Activated CD4-positive, alpha-beta T cell treated with anti-CD3 and anti-CD28 coated beads for 36 hours (primary cell): ENCODE measurements at regions of chr2 and their contacts with region 1.

Region 1: DNA sequence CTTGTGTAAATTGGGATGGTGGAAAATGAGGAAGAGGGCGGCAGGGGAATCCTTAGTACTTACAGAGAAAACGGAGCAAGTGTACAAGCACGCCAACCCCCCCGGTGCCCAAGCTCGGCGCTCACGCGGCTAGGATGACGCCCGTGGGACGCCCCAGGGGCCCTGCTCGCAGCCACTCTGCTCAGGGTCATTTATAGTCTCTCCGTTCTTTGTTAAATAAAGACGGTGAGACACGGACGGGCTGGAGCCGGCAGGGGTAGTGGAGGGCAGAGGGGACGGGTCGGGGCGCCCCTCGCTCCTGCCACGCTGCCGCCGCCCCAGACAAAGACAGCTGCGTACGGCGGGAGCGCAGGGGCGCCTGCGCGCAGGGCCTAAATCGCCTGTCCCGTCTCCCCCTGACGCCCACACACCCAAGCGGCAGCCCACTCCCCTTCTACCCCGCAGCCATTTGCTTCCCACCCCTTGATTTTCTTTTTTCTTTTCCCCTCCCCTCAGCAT is 37.8 kb downstream of the PCBP1 start:
- DNase-seq: peak; percentile 74
- ATAC-seq: peak; percentile 53
- H3K4me3 Mint-ChIP-seq: peak overlapping the region; percentile 92
- H3K27ac Mint-ChIP-seq: peak overlapping the region; percentile 100
- H3K4me1 Mint-ChIP-seq: peaks cover 72% of the 10 kb centered on the region
- H3K27me3 Mint-ChIP-seq: no peaks in the 10 kb centered on the region

Region 2: DNA sequence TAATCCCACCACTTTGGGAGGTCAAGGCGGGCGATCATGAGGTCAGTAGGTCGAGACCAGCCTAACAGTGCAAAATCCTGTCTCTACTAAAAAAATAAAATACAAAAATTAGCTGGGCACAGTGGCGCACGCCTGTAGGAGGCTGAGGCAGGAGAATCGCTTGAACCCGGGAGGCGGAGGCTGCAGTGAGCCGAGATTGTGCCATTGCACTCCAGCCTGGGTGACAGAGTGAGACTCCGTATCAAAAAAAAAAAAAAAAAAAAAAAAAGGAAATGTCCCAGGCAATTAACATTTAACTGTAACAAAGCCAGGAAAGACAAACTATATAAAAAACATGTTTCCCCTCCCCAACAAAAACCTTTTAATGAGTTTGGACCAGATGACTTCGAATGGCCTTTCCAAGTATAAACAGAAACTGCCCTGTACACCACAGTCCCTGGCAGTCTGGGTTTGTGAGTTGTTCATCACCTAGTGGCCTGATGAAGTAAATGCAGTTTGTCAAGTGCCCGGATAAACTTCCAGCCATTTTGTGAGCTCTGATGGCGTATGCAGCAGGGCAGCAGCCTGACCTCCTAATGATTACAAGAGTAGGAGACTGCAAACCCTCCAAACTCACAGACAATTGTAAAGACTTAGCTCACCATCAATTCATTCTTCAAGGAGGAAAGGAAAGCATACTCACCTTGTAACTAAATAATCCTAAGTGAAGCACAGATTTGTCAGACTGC is 54.3 kb before region 1 on chr2:
- CTCF ChIA-PET with region 1: no interaction called
- POLR2A ChIA-PET with region 1: interaction called, 8 read pairs
- intact Hi-C with region 1: loop called in 1 of 2 experiments (anchors 1 kb)
- DNase-seq: peak; percentile 73
- ATAC-seq: peak; percentile 60
- H3K4me3 Mint-ChIP-seq: peak overlapping the region; percentile 48
- H3K27ac Mint-ChIP-seq: peak overlapping the region; percentile 94
- H3K4me1 Mint-ChIP-seq: peaks cover 51% of the 10 kb centered on the region
- H3K27me3 Mint-ChIP-seq: no peaks in the 10 kb centered on the region

Region 3: DNA sequence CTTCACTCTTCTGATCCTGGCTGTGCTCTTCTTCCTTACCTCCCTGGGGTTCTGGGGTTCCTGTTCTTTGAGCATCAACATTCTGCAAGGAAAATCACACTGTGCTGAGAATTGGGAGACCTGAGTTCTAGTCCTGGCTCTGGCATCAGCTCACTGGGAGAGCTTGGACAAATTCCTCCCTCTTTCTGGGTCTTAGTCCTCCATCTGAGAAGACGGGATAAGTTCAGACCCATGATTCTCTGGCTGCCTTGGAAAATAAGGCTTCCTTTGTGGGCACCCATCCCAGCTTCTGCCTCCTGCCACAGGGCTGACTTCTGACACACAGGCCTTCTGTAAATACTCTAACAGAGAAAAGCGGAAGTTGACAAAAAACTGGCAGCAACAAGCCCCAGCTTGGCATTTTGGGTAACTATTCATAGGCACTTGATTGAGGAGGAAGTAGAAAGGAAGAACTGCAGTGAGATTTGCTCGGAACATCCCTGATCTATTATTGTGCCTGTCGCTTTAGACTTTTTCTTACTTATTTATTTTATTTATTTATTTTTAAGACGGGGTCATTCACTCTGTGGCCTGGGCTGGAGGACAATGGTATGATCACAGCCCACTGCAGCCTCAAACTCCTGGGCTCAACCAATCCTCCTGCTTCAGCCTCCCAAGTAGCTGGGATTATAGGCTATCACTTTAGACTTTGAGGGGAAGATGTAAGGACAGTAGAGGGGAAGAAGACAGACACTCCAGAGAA is 29.9 kb before region 1 on chr2:
- CTCF ChIA-PET with region 1: interaction called, 9 read pairs
- POLR2A ChIA-PET with region 1: interaction called, 21 read pairs
- intact Hi-C with region 1: no loop called
- DNase-seq: peak; percentile 67
- ATAC-seq: peak; percentile 82
- H3K4me3 Mint-ChIP-seq: peak overlapping the region; percentile 75
- H3K27ac Mint-ChIP-seq: peak overlapping the region; percentile 97
- H3K4me1 Mint-ChIP-seq: peaks cover 59% of the 10 kb centered on the region
- H3K27me3 Mint-ChIP-seq: no peaks in the 10 kb centered on the region

Region 4: DNA sequence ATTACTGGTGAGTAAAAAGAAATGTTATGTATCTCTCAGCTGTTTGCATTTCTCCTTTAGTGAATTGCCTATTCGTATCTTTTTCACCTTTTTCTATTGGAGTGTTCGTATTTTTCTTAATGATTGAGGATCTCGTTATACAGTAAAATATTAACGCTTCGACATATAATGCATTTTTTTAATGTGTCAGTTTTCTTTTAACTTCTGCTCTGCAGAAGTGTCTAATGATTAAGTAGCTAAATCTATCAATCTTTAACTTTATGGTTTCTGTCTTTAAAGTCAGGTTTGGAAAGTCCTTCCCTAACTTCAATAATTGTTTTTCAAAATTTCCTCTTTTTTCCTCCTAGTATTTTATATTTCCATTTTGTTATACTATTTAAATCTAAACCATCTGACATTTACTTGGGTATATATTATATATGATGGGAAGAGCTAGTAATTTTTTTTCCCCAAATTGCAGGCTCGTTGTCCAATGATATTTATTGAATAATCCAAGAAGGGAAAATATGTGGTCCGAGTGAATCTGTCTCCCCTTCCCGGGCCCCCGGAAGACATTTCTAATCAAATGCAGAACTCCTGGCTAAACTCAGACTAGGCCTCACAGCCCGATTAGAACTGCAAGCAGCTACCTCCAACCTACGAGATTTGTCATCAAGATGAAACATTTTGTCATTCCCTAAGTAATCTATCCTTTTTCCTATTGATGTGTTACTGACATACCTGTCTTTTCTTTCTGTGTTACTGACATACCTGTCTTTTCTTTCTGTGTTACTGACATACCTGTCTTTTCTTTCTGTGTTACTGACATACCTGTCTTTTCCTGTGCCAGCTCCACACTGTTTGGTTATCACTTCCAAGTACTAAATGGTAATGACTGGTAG is 20.6 kb before region 1 on chr2:
- CTCF ChIA-PET with region 1: interaction called, 9 read pairs
- POLR2A ChIA-PET with region 1: interaction called, 7 read pairs
- intact Hi-C with region 1: loop called (anchors 1 kb)
- DNase-seq: peak; percentile 76
- ATAC-seq: no peak
- H3K4me3 Mint-ChIP-seq: peak overlapping the region; percentile 73
- H3K27ac Mint-ChIP-seq: peak overlapping the region; percentile 96
- H3K4me1 Mint-ChIP-seq: peaks cover 56% of the 10 kb centered on the region
- H3K27me3 Mint-ChIP-seq: no peaks in the 10 kb centered on the region

Region 5: GRCh38 chr2:70248181-70248847 is 123.3 kb after region 1 on chr2 and contains the start of gene TIA1:
- CTCF ChIA-PET with region 1: no interaction called
- POLR2A ChIA-PET with region 1: no interaction called
- intact Hi-C with region 1: no loop called
- DNase-seq: peak; percentile 99
- ATAC-seq: peak; percentile 98
- H3K4me3 Mint-ChIP-seq: peak within 1 kb of the TSS; percentile 98
- H3K27ac Mint-ChIP-seq: peak within 1 kb of the TSS; percentile 97
- H3K4me1 Mint-ChIP-seq: peaks cover 30% of the 10 kb centered on the region
- H3K27me3 Mint-ChIP-seq: no peaks in the 10 kb centered on the region
- total RNA-seq, gene TIA1: 85.4 to 98.3 TPM

Region 6: DNA sequence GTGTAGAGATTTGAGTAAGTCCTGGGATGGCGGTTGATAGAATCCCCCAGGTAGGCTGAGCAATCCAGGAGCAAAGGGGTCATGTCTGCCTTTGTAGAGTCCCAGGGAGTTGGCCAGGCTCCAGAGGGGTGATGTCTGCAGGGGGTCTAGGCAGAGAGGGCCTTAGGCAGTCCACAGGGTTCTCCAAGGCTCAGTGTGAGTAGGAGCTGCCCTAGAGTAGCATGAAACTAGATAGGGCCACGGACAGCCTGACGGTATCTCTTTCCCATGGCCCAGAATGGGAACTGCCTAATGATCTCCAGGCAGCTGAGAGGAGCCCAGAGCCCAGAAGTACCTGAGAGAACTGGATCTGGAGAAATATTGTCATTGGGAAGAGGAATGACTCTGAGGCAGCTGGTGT is 185.9 kb after region 1 on chr2:
- CTCF ChIA-PET with region 1: no interaction called
- POLR2A ChIA-PET with region 1: no interaction called
- intact Hi-C with region 1: no loop called
- DNase-seq: no peak
- ATAC-seq: no peak
- H3K4me3 Mint-ChIP-seq: no peak overlapping the region
- H3K27ac Mint-ChIP-seq: no peak overlapping the region
- H3K4me1 Mint-ChIP-seq: no peaks in the 10 kb centered on the region
- H3K27me3 Mint-ChIP-seq: peaks cover 3% of the 10 kb centered on the region